Spleen (tissue), 13 donors: ENCODE measurements at regions of chr9 and their contacts with region 1.

Region 1: GRCh38 chr9:121463026-121463807 is 36.4 kb downstream of the GGTA1 start:
- DNase-seq: peak; percentile 79
- H3K4me3 ChIP-seq: no peak overlapping the region
- H3K27ac ChIP-seq: peak overlapping the region in 1 of 8 donors; percentile 50
- H3K4me1 ChIP-seq: peaks cover 0 to 12% (median 4%) of the 10 kb centered on the region in 6 donors
- H3K27me3 ChIP-seq: peaks cover 0 to 39% (median 0%) of the 10 kb centered on the region in 7 donors
- CTCF ChIP-seq: peak in 10 of 11 experiments; percentile 12 to 80 (median 66)
- POLR2A ChIP-seq: no peak

Region 2: DNA sequence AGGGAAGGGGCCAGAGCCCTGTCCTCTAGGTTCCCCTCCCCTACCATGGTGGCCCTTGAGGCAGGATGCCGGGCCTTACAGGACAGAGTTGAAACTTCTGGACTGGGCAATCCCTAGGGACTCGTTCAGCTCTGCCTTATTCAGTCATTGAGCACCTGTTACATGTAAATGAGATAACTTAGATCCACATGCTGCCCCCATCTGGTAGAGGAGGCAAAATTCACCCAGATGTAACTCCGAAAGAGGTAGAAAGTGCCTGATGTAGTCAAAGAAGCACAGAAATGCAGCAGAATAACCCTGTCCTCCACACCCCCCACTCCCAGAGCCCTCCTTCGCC is 34.9 kb after region 1 on chr9:
- intact Hi-C with region 1: loop called (anchors 5 kb)
- DNase-seq: no peak
- H3K4me3 ChIP-seq: peak overlapping the region; percentile 23 to 72 (median 50)
- H3K27ac ChIP-seq: peak overlapping the region in 5 of 8 donors; percentile 83 to 88 (median 85)
- H3K4me1 ChIP-seq: peaks cover 23 to 54% (median 41%) of the 10 kb centered on the region in 6 donors
- H3K27me3 ChIP-seq: peaks cover 0 to 66% (median 23%) of the 10 kb centered on the region in 7 donors
- CTCF ChIP-seq: peak in 10 of 11 experiments; percentile 24 to 78 (median 63)
- POLR2A ChIP-seq: no peak